ENCODE measurements at regions of chr17 and their contacts with region 1.

Region 1: GRCh38 chr17:35969558-35970380 is 11.5 kb downstream of the CCL16 start:
- DNase-seq: peak; percentile 90
- H3K4me3 Mint-ChIP-seq: no peak overlapping the region
- H3K27ac Mint-ChIP-seq: no peak overlapping the region
- H3K4me1 Mint-ChIP-seq: no peaks in the 10 kb centered on the region
- H3K27me3 Mint-ChIP-seq: peaks cover 2% of the 10 kb centered on the region

Region 2: GRCh38 chr17:35953720-35954119 is 16.0 kb before region 1 on chr17:
- CTCF ChIA-PET with region 1: interaction called, 11 read pairs
- intact Hi-C with region 1: no loop called
- DNase-seq: no peak
- H3K4me3 Mint-ChIP-seq: no peak overlapping the region
- H3K27ac Mint-ChIP-seq: no peak overlapping the region
- H3K4me1 Mint-ChIP-seq: no peaks in the 10 kb centered on the region
- H3K27me3 Mint-ChIP-seq: peaks cover 7% of the 10 kb centered on the region

Region 3: DNA sequence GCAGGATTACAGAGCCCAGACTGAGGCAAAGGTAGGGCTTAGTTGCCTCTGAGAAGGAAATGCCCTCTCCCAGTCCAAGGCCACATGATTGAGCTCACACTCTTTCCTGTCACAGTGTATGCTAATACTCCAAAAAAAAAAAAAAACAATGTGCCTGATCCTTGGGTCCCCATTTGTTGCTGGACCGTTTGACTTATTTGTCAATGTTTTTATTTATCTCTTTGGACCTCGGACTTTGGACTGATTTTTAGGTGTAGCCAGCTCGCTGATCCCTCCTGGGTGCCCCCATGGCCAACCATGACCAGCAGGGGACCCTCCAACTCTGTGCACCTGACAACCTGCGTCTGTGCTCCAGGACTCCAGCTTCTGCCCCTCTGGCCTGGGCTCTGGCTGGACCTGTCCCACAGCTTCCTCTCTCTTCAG is 12.2 kb after region 1 on chr17:
- CTCF ChIA-PET with region 1: interaction called, 10 read pairs
- intact Hi-C with region 1: no loop called
- DNase-seq: peak; percentile 18
- H3K4me3 Mint-ChIP-seq: no peak overlapping the region
- H3K27ac Mint-ChIP-seq: no peak overlapping the region
- H3K4me1 Mint-ChIP-seq: no peaks in the 10 kb centered on the region
- H3K27me3 Mint-ChIP-seq: peaks cover 4% of the 10 kb centered on the region